Right ventricle myocardium inferior (tissue), 1 donor: ENCODE measurements at regions of chr19 and their contacts with region 1.

Region 1: GRCh38 chr19:49331616-49332055 is 3.6 kb upstream of the CD37 start:
- DNase-seq: no peak
- ATAC-seq: peak; percentile 71

Region 2: GRCh38 chr19:49186108-49186507 is 145.5 kb before region 1 on chr19:
- intact Hi-C with region 1: no loop called
- DNase-seq: no peak
- ATAC-seq: no peak

Region 3: GRCh38 chr19:49224856-49225255 is 106.8 kb before region 1 on chr19:
- intact Hi-C with region 1: loop called (anchors 10 kb)
- DNase-seq: peak; percentile 56
- ATAC-seq: peak; percentile 80